Activated T-helper 2 cell treated with anti-CD3 and anti-CD28 coated beads, Interferon-gamma antibody, Interleukin-2, Interleukin-4, amounts not matched to agents 10 μg/mL and 5 μg/mL and 100 μg/mL, durations not matched to agents 14 hours and 24 hours and 36 hours (primary cell): ENCODE measurements at regions of chr1 and their contacts with region 1.

Region 1: GRCh38 chr1:26306290-26307229 is at the start of gene UBXN11:
- DNase-seq: peak; percentile 91
- H3K4me3 Mint-ChIP-seq: peak within 1 kb of the TSS; percentile 99
- H3K27ac Mint-ChIP-seq: peak within 1 kb of the TSS; percentile 93
- H3K4me1 Mint-ChIP-seq: peaks cover 25% of the 10 kb centered on the region
- H3K27me3 Mint-ChIP-seq: no peaks in the 10 kb centered on the region
- total RNA-seq, gene UBXN11: 13.1 and 14.2 TPM in 2 replicates

Region 2: GRCh38 chr1:26284597-26285360 is 21.8 kb before region 1 on chr1:
- intact Hi-C with region 1: loop called (anchors 1 kb)
- DNase-seq: peak; percentile 91
- H3K4me3 Mint-ChIP-seq: peak overlapping the region; percentile 77
- H3K27ac Mint-ChIP-seq: peak overlapping the region; percentile 100
- H3K4me1 Mint-ChIP-seq: peaks cover 82% of the 10 kb centered on the region
- H3K27me3 Mint-ChIP-seq: no peaks in the 10 kb centered on the region